Activated CD4-positive, alpha-beta memory T cell treated with anti-CD3 and anti-CD28 coated beads for 36 hours (primary cell): ENCODE measurements at regions of chr4 and their contacts with region 1.

Region 1: GRCh38 chr4:165355900-165356300 is 22.9 kb upstream of the CPE start:
- DNase-seq: peak; percentile 21
- H3K4me3 Mint-ChIP-seq: no peak overlapping the region
- H3K27ac Mint-ChIP-seq: no peak overlapping the region
- H3K4me1 Mint-ChIP-seq: no peaks in the 10 kb centered on the region
- H3K27me3 Mint-ChIP-seq: peaks cover 38% of the 10 kb centered on the region

Region 2: GRCh38 chr4:164956766-164957643 is 398.9 kb before region 1 on chr4:
- CTCF ChIA-PET with region 1: no interaction called
- POLR2A ChIA-PET with region 1: no interaction called
- intact Hi-C with region 1: no loop called
- DNase-seq: peak; percentile 87
- H3K4me3 Mint-ChIP-seq: peak overlapping the region; percentile 90
- H3K27ac Mint-ChIP-seq: no peak overlapping the region
- H3K4me1 Mint-ChIP-seq: peaks cover 14% of the 10 kb centered on the region
- H3K27me3 Mint-ChIP-seq: peaks cover 1% of the 10 kb centered on the region

Region 3: GRCh38 chr4:165312506-165312905 is 43.4 kb before region 1 on chr4:
- CTCF ChIA-PET with region 1: no interaction called
- POLR2A ChIA-PET with region 1: no interaction called
- intact Hi-C with region 1: no loop called
- DNase-seq: no peak
- H3K4me3 Mint-ChIP-seq: no peak overlapping the region
- H3K27ac Mint-ChIP-seq: no peak overlapping the region
- H3K4me1 Mint-ChIP-seq: no peaks in the 10 kb centered on the region
- H3K27me3 Mint-ChIP-seq: no peaks in the 10 kb centered on the region

Region 4: GRCh38 chr4:165370530-165370929 is 14.6 kb after region 1 on chr4:
- CTCF ChIA-PET with region 1: no interaction called
- POLR2A ChIA-PET with region 1: no interaction called
- intact Hi-C with region 1: no loop called
- DNase-seq: no peak
- H3K4me3 Mint-ChIP-seq: no peak overlapping the region
- H3K27ac Mint-ChIP-seq: no peak overlapping the region
- H3K4me1 Mint-ChIP-seq: no peaks in the 10 kb centered on the region
- H3K27me3 Mint-ChIP-seq: peaks cover 12% of the 10 kb centered on the region

Region 5: DNA sequence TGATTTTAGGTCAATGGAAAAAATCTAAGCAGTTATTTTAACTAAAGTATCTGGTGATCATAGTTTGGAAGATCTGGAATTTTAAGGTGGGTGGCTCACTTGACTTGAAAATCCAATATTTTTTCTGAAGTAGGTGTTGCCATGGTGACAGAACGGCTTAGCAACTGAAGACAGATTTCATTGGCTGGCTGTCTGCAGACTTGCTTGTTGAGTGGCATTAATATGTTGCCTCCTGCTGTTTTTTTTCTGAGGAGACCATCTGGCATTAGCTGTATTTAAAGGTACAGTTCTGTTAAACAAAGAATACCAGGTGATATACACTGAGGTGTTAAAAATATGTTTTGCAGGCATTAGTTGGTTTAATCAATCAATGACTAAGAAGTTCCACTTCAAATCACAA is 42.7 kb after region 1 on chr4:
- CTCF ChIA-PET with region 1: no interaction called
- POLR2A ChIA-PET with region 1: no interaction called
- intact Hi-C with region 1: no loop called
- DNase-seq: no peak
- H3K4me3 Mint-ChIP-seq: no peak overlapping the region
- H3K27ac Mint-ChIP-seq: no peak overlapping the region
- H3K4me1 Mint-ChIP-seq: no peaks in the 10 kb centered on the region
- H3K27me3 Mint-ChIP-seq: peaks cover 4% of the 10 kb centered on the region

Region 6: DNA sequence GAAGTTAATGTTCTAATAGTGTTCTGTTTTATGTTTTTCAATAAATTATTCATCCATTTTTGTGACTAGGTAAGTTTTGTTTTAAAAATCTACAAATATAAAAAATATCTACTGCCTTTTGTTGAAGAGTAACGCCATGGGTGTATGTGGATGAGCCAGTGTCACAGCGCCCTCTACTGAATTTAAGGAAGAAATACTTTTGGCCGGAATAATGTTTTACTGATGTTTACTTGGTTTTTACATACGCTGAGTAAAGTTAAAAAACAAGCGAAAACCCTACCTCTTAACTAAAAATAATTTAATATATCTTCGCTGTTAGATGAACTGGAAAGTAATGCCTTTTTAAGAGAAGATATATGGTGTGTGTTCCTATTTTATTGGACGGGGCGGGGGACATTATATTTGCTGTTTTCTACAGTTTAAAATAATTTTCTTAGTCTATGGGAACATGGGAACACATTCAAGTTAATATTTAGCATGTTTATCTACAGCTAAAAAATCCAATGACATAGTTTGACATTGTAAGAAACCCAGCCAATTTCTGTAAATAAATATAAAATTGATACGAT is 109.0 kb after region 1 on chr4:
- CTCF ChIA-PET with region 1: interaction called, 5 read pairs
- POLR2A ChIA-PET with region 1: no interaction called
- intact Hi-C with region 1: loop called (anchors 2 kb)
- DNase-seq: no peak
- H3K4me3 Mint-ChIP-seq: no peak overlapping the region
- H3K27ac Mint-ChIP-seq: no peak overlapping the region
- H3K4me1 Mint-ChIP-seq: no peaks in the 10 kb centered on the region
- H3K27me3 Mint-ChIP-seq: peaks cover 3% of the 10 kb centered on the region